Naive thymus-derived CD8-positive, alpha-beta T cell (primary cell): ENCODE measurements at regions of chr15 and their contacts with region 1.

Region 1: GRCh38 chr15:63497642-63498467 is 6.5 kb upstream of the USP3 start:
- DNase-seq: peak; percentile 50 to 88 (median 78)
- ATAC-seq: peak; percentile 68 to 89
- H3K4me3 Mint-ChIP-seq: no peak overlapping the region
- H3K27ac Mint-ChIP-seq: no peak overlapping the region
- H3K4me1 Mint-ChIP-seq: peaks cover 35 to 72% (median 57%) of the 10 kb centered on the region in 4 donors
- H3K27me3 Mint-ChIP-seq: no peaks in the 10 kb centered on the region

Region 2: DNA sequence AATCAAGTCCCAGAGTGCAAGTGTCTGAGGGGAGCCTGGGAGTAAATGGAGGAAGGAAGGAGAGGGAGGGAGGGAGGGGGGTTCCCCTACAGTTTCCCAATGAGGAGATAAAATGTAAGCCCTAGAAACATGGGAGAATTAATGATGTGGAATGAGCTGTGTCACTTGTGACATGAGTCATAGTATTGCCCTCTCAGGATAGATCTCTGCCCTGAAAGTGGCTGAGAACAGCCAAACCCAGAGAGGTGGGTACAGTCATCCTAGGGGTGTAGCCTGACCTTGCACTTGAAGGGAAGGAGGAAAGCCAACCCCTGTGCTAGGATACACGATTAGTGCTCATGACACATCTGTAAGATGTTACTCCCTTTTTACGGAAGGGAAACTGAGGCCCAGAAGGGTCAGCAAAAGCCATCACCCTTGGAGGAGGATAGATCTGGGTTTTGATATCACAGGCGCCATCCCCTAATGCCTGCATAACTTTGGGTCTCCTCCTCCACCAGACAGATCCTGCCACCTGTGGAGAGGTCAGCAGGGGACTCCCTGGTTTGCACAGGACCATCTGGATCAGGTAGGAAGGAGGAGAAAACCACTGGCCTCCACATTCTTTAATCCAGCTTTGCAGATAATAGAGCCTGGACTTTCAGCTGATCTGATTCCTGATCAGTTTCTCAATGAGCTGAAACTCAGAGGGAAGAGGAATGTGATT is 16.6 kb before region 1 on chr15:
- POLR2A ChIA-PET with region 1: interaction called, 629 read pairs
- DNase-seq: no peak
- ATAC-seq: no peak
- H3K4me3 Mint-ChIP-seq: peak overlapping the region in 9 of 10 donors; percentile 22 to 92 (median 78)
- H3K27ac Mint-ChIP-seq: peak overlapping the region; percentile 98 to 100 (median 100)
- H3K4me1 Mint-ChIP-seq: peaks cover 22 to 90% (median 78%) of the 10 kb centered on the region in 4 donors
- H3K27me3 Mint-ChIP-seq: no peaks in the 10 kb centered on the region

Region 3: GRCh38 chr15:63487076-63487757 is 10.6 kb before region 1 on chr15:
- POLR2A ChIA-PET with region 1: interaction called, 629 read pairs
- DNase-seq: peak; percentile 73 to 94 (median 85)
- ATAC-seq: peak; percentile 88 to 94
- H3K4me3 Mint-ChIP-seq: peak overlapping the region; percentile 29 to 82 (median 69)
- H3K27ac Mint-ChIP-seq: peak overlapping the region; percentile 77 to 96 (median 88)
- H3K4me1 Mint-ChIP-seq: peaks cover 20 to 84% (median 64%) of the 10 kb centered on the region in 4 donors
- H3K27me3 Mint-ChIP-seq: no peaks in the 10 kb centered on the region

Region 4: GRCh38 chr15:63600616-63601025 is 102.8 kb after region 1 on chr15:
- POLR2A ChIA-PET with region 1: interaction called, 10 read pairs
- DNase-seq: peak; percentile 86 to 95 (median 89)
- ATAC-seq: peak; percentile 76 to 78
- H3K4me3 Mint-ChIP-seq: peak overlapping the region; percentile 88 to 98 (median 94)
- H3K27ac Mint-ChIP-seq: peak overlapping the region; percentile 85 to 99 (median 96)
- H3K4me1 Mint-ChIP-seq: peaks cover 28 to 70% (median 67%) of the 10 kb centered on the region in 4 donors
- H3K27me3 Mint-ChIP-seq: no peaks in the 10 kb centered on the region